GM10248 (cell line): ENCODE measurements at regions of chr15 and their contacts with region 1.

Region 1: GRCh38 chr15:90716976-90717821 is at the start of gene BLM:
- DNase-seq: peak; percentile 99
- CTCF ChIP-seq: no peak

Region 2: GRCh38 chr15:90598031-90598577 is 119.1 kb before region 1 on chr15:
- CTCF ChIA-PET with region 1: no interaction called
- POLR2A ChIA-PET with region 1: no interaction called
- DNase-seq: peak; percentile 76
- CTCF ChIP-seq: peak; percentile 38

Region 3: DNA sequence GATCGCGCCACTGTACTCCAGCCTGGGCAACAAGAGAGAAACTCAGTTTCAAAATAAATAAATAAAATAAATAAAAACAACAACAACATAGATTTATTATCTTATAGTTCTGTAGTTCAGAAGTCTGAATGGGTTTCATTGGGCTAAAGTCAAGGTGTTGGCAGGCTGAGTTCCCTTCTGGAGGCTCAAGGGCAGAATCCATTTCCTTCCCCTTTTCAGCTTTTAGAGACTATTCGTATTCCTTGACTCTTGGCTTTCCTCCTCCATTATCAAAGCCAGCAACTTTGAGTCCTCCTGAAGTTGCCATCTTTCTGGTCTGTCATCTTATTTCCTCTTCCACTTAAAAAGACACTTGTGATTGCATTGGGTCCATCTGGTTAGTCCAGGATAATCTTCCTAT is 12.1 kb after region 1 on chr15:
- CTCF ChIA-PET with region 1: interaction called, 10 read pairs
- POLR2A ChIA-PET with region 1: no interaction called
- DNase-seq: no peak
- CTCF ChIP-seq: no peak